Pancreas (tissue), 10 donors: ENCODE measurements at regions of chr16 and their contacts with region 1.

Region 1: GRCh38 chr16:66894948-66895688 is 14.8 kb downstream of the PDP2 start:
- DNase-seq: peak in 3 of 6 donors; percentile 38 to 71 (median 51)
- ATAC-seq: peak; percentile 57 to 86 (median 86)
- H3K4me3 ChIP-seq: no peak overlapping the region
- H3K27ac ChIP-seq: no peak overlapping the region
- H3K4me1 ChIP-seq: peaks cover 0 to 10% (median 6%) of the 10 kb centered on the region in 3 donors
- H3K27me3 ChIP-seq: no peaks in the 10 kb centered on the region
- CTCF ChIP-seq: peak; percentile 36 to 56 (median 50)

Region 2: DNA sequence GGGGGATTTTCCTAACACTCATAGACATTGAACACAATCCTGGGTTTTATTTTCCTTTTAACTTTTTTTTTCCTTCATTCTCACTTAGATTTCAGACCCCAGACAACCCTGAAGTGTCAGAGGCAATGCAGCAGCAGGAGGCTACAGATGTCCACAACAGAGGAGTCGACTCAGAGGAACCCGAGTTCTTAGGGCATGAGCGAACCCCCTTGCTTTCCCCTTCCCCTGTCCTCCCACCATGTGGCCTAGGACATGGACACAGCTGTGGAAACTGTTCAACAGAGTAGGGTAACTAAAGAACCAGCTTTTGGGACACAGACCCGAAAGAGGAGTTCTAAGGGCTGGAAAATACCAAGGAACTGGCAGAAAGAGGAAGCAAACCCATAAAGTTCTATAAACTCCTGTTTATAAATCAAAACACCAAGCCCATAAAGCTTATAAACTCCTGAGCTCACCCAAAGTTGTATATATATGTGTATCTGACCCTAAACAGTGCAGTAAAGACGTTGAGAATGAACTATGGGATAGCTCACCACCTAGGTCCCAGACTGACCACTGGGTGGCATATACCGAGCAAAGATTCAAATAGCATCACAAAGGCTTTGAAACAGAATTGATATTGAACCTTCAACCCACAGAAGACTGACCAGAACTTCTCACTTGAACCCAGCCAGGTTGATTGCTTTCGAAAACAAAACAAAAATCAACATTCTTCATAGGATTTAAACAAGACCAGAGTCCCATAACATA is 232.5 kb before region 1 on chr16:
- intact Hi-C with region 1: no loop called
- DNase-seq: no peak
- ATAC-seq: peak in 3 of 4 donors; percentile 57 to 61 (median 58)
- H3K4me3 ChIP-seq: no peak overlapping the region
- H3K27ac ChIP-seq: no peak overlapping the region
- H3K4me1 ChIP-seq: peaks cover 0 to 18% (median 6%) of the 10 kb centered on the region in 3 donors
- H3K27me3 ChIP-seq: no peaks in the 10 kb centered on the region
- CTCF ChIP-seq: peak in 1 of 4 donors; percentile 20

Region 3: GRCh38 chr16:67150833-67151396 is 255.8 kb after region 1 on chr16 and contains the start of gene B3GNT9:
- intact Hi-C with region 1: loop called in 1 of 3 experiments (anchors 10 kb)
- DNase-seq: peak in 5 of 6 donors; percentile 58 to 87 (median 72)
- ATAC-seq: peak; percentile 60 to 76 (median 72)
- H3K4me3 ChIP-seq: peak within 1 kb of the TSS; percentile 37 to 61 (median 55)
- H3K27ac ChIP-seq: peak within 1 kb of the TSS; percentile 2 to 48 (median 40)
- H3K4me1 ChIP-seq: peaks cover 0 to 3% (median 0%) of the 10 kb centered on the region in 3 donors
- H3K27me3 ChIP-seq: no peaks in the 10 kb centered on the region
- CTCF ChIP-seq: no peak
- total RNA-seq, gene B3GNT9: 1.8 to 5.1 (median 3.5) TPM